ENCODE measurements at regions of chr12 and their contacts with region 1.

Region 1: GRCh38 chr12:110826592-110827200 is 20.1 kb upstream of the CCDC63 start:
- DNase-seq: peak; percentile 81 to 92 (median 84)
- ATAC-seq: peak; percentile 70 to 97 (median 95)
- H3K4me3 ChIP-seq: peak overlapping the region in 9 of 12 donors; percentile 13 to 47 (median 28)
- H3K27ac ChIP-seq: no peak overlapping the region
- H3K4me1 ChIP-seq: peaks cover 0 to 13% (median under 1%) of the 10 kb centered on the region in 12 donors
- H3K27me3 ChIP-seq: no peaks in the 10 kb centered on the region
- CTCF ChIP-seq: peak; percentile 67 to 86 (median 80)
- POLR2A ChIP-seq: no peak

Region 2: GRCh38 chr12:110513842-110514241 is 312.9 kb before region 1 on chr12:
- intact Hi-C with region 1: loop called in 8 of 10 experiments (anchors 2 to 10 kb)
- DNase-seq: no peak
- ATAC-seq: no peak
- H3K4me3 ChIP-seq: no peak overlapping the region
- H3K27ac ChIP-seq: no peak overlapping the region
- H3K4me1 ChIP-seq: peaks cover 0 to 4% (median 0%) of the 10 kb centered on the region in 12 donors
- H3K27me3 ChIP-seq: no peaks in the 10 kb centered on the region
- CTCF ChIP-seq: no peak
- POLR2A ChIP-seq: no peak

Region 3: DNA sequence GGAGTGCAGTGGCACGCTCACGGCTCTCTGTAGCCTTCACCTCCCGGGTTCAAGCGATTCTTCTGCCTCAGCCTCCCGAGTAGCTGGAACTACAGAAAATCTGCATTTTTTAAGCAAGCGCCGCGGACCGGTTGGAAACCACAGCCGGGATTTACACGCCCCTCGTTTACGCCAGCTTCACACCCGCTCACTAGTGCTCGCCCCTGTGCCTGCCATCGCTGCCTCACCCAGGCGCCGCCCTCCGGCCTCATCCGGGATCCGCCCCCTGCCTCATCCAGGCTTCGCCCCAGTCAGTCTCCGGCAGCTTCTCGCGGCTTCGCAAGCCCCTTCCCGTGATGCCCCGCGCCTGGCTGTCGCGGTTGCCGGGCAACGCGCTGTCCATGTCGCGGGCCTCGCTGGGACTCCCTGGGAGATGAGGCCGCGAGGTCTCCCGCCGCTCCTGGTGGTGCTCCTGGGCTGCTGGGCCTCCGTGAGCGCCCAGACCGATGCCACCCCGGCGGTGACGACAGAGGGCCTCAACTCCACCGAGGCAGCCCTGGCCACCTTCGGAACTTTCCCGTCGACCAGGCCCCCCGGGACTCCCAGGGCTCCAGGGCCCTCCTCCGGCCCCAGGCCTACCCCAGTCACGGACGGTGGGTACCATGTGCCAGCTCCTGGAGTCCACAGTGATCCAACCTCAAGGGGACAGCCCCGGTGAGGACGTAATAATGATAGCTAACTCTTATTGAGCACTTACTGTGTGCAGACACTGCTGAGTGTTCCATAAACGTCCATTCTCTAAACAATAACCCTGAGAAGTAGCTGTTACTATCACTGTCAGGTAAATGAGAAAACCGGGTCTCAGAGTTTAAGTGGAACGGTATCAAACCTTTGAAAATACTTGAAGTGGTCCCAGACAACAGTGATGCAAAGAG is 212.7 kb before region 1 on chr12 and contains the start of gene TCTN1:
- intact Hi-C with region 1: loop called in 5 of 10 experiments (anchors 10 kb)
- DNase-seq: peak; percentile 97 to 99 (median 98)
- ATAC-seq: peak; percentile 98 to 100 (median 100)
- H3K4me3 ChIP-seq: peak within 1 kb of the TSS; percentile 24 to 93 (median 65)
- H3K27ac ChIP-seq: peak within 1 kb of the TSS in 11 of 12 donors; percentile 47 to 82 (median 67)
- H3K4me1 ChIP-seq: peaks cover 0 to 15% (median 7%) of the 10 kb centered on the region in 12 donors
- H3K27me3 ChIP-seq: no peaks in the 10 kb centered on the region
- CTCF ChIP-seq: peak in 4 of 12 donors; percentile 10 to 28 (median 21)
- POLR2A ChIP-seq: peak in 1 of 2 donors; percentile 69
- total RNA-seq, gene TCTN1: 17.3 to 27.7 (median 20.2) TPM

Region 4: DNA sequence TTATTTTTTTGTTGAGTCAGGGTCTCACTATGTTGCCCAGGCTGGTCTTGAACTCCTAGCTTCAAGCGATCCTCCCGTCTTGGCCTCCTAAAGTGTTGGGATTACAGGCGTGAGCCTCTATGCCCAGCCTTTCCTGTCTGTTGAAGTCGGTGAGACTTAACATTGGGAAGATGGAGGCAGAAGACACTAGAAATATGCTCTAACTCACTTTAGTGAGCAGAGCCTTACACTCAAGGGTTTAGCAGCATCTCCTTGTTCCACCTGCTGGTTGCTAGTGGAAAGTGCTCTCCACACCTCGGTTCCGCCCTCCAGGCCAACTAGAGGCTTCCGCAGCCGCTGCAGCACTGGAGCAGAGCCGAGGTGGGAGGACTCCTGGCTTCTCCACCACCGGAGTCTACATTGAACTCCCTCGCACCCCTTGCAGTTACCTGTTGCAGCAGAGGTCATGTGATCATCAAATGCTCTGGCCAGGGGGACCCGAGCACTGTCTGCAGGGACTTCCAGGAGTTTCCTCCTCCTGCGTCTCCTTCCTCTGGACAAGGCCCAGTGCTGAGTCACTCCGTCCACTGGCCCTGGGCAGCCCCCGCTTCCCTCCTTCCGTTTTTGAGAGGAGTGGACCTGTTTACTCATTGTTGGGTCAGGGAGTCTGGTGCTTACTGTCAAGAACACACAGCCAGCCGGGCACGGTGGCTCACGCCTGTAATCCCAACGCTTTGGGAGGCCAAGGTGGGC is 128.4 kb before region 1 on chr12:
- intact Hi-C with region 1: loop called in 1 of 10 experiments (anchors 10 kb)
- DNase-seq: peak; percentile 80 to 86 (median 81)
- ATAC-seq: peak; percentile 69 to 86 (median 72)
- H3K4me3 ChIP-seq: peak overlapping the region in 8 of 12 donors; percentile 10 to 41 (median 26)
- H3K27ac ChIP-seq: peak overlapping the region in 10 of 12 donors; percentile 4 to 68 (median 39)
- H3K4me1 ChIP-seq: peaks cover 7 to 53% (median 15%) of the 10 kb centered on the region in 12 donors
- H3K27me3 ChIP-seq: no peaks in the 10 kb centered on the region
- CTCF ChIP-seq: peak; percentile 58 to 85 (median 72)
- POLR2A ChIP-seq: peak in 1 of 2 donors; percentile 24

Region 5: GRCh38 chr12:110742718-110743570 is 83.8 kb before region 1 on chr12 and contains the start of gene PPP1CC:
- intact Hi-C with region 1: loop called in 4 of 10 experiments (anchors 5 to 10 kb)
- DNase-seq: peak; percentile 94 to 97 (median 96)
- ATAC-seq: peak; percentile 86 to 96 (median 94)
- H3K4me3 ChIP-seq: peak within 1 kb of the TSS; percentile 64 to 100 (median 97)
- H3K27ac ChIP-seq: peak within 1 kb of the TSS; percentile 83 to 97 (median 94)
- H3K4me1 ChIP-seq: peaks cover 2 to 66% (median 46%) of the 10 kb centered on the region in 12 donors
- H3K27me3 ChIP-seq: no peaks in the 10 kb centered on the region
- CTCF ChIP-seq: peak in 3 of 12 donors; percentile 10 to 40 (median 21)
- POLR2A ChIP-seq: peak in 1 of 2 donors; percentile 79
- total RNA-seq, gene PPP1CC: 110 to 207 (median 150) TPM